Activated CD4-positive, alpha-beta T cell treated with anti-CD3 and anti-CD28 coated beads for 36 hours (primary cell): ENCODE measurements at regions of chr2 and their contacts with region 1.

Region 1: DNA sequence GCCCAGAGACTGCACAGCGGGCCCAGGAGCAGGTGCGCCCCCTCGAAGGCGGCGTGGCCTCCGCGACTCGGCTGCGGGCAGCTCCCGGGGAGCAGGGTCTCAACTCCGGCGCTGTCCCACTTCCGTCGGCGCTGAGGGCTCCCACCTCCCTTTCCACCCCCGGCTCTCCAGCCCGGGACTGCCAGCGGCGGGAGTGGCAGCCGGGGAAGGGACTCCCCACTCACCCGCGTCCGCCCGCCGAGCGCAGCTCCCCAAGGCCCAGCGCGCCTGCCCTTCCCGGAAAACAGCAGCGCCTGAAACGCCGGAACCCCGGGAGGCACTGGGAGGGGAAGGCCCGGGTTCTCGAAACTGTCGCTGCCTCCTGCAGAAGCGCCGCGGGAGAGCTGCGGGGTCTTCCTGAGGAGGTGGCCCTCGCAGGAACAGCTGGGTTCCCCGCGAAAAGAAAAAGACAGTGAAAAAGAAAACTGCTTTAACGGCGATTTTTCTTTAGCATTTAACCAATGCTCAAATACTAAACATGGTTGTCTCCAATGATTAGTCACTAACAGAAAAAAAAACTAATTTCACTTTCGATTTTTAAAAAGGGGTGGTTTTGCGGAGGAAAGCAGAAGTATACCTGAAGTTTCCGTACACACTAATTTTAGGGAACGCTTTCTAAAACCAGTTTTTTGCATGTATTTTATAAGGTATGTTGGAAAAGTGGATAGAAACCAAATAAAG is at the start of gene NMI:
- DNase-seq: peak; percentile 84
- ATAC-seq: peak; percentile 64
- H3K4me3 Mint-ChIP-seq: peak within 1 kb of the TSS; percentile 76
- H3K27ac Mint-ChIP-seq: peak within 1 kb of the TSS; percentile 96
- H3K4me1 Mint-ChIP-seq: peaks cover 43% of the 10 kb centered on the region
- H3K27me3 Mint-ChIP-seq: peaks cover 3% of the 10 kb centered on the region
- total RNA-seq, gene NMI: 32.3 to 37.4 TPM

Region 2: GRCh38 chr2:150853263-150853662 is 436.3 kb before region 1 on chr2:
- CTCF ChIA-PET with region 1: no interaction called
- POLR2A ChIA-PET with region 1: no interaction called
- intact Hi-C with region 1: no loop called
- DNase-seq: no peak
- ATAC-seq: no peak
- H3K4me3 Mint-ChIP-seq: no peak overlapping the region
- H3K27ac Mint-ChIP-seq: no peak overlapping the region
- H3K4me1 Mint-ChIP-seq: no peaks in the 10 kb centered on the region
- H3K27me3 Mint-ChIP-seq: peaks cover 2% of the 10 kb centered on the region

Region 3: GRCh38 chr2:151261231-151261976 is 28.1 kb before region 1 on chr2 and contains the start of gene RBM43:
- CTCF ChIA-PET with region 1: interaction called, 3 read pairs
- POLR2A ChIA-PET with region 1: no interaction called
- intact Hi-C with region 1: loop called (anchors 1 kb)
- DNase-seq: peak; percentile 88
- ATAC-seq: peak; percentile 92
- H3K4me3 Mint-ChIP-seq: peak within 1 kb of the TSS; percentile 89
- H3K27ac Mint-ChIP-seq: peak within 1 kb of the TSS; percentile 98
- H3K4me1 Mint-ChIP-seq: peaks cover 18% of the 10 kb centered on the region
- H3K27me3 Mint-ChIP-seq: no peaks in the 10 kb centered on the region
- total RNA-seq, gene RBM43: 5.7 to 5.8 TPM

Region 4: GRCh38 chr2:151367571-151367970 is 78.0 kb after region 1 on chr2:
- CTCF ChIA-PET with region 1: no interaction called
- POLR2A ChIA-PET with region 1: no interaction called
- intact Hi-C with region 1: no loop called
- DNase-seq: no peak
- ATAC-seq: no peak
- H3K4me3 Mint-ChIP-seq: no peak overlapping the region
- H3K27ac Mint-ChIP-seq: no peak overlapping the region
- H3K4me1 Mint-ChIP-seq: no peaks in the 10 kb centered on the region
- H3K27me3 Mint-ChIP-seq: peaks cover 2% of the 10 kb centered on the region

Region 5: GRCh38 chr2:151422917-151423439 is 133.4 kb after region 1 on chr2:
- CTCF ChIA-PET with region 1: interaction called, 3 read pairs
- POLR2A ChIA-PET with region 1: interaction called, 9 read pairs
- intact Hi-C with region 1: loop called in 1 of 2 experiments (anchors 1 kb)
- DNase-seq: peak; percentile 29
- ATAC-seq: peak; percentile 68
- H3K4me3 Mint-ChIP-seq: no peak overlapping the region
- H3K27ac Mint-ChIP-seq: peak overlapping the region; percentile 56
- H3K4me1 Mint-ChIP-seq: peaks cover 41% of the 10 kb centered on the region
- H3K27me3 Mint-ChIP-seq: no peaks in the 10 kb centered on the region

Region 6: GRCh38 chr2:151439127-151439526 is 149.6 kb after region 1 on chr2:
- CTCF ChIA-PET with region 1: no interaction called
- POLR2A ChIA-PET with region 1: no interaction called
- intact Hi-C with region 1: no loop called
- DNase-seq: no peak
- ATAC-seq: no peak
- H3K4me3 Mint-ChIP-seq: no peak overlapping the region
- H3K27ac Mint-ChIP-seq: no peak overlapping the region
- H3K4me1 Mint-ChIP-seq: peaks cover 2% of the 10 kb centered on the region
- H3K27me3 Mint-ChIP-seq: no peaks in the 10 kb centered on the region

Region 7: DNA sequence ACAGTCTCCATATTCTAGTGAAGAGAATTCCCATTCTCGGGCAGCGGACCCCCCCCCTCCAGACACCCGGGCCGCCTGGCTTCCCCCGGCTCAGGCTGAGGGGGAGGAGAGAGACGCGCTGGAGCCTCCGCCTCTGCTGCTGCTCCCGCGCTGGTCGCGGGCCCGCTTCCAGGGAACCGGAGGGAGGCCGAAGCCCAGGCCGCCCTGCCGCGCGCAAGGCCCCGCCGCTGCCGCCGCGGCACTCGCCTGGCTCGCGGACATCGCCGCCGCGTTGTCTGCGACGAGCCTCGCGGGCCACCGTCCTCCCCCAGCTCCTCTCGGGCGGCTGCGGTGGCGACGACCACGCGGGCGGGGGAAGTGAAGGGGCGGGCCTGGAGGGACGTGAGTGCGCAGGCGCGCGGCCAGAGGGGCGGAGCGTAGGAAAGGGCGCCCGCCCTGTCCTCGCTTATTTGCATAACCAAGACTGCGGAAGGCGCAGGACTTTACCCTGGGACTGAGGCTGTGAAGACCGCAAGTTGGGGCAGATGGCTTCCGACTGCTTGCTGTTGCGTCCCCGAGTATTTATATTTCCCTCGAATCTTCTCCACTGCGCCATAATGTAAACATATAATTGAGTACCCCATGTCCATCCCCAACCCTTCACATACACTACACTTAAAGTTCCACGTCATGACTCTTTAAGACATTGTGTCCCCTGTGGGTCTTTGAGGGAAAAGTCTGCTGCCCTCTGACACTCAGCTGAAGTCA is 538.8 kb after region 1 on chr2 and contains the start of gene ARL5A:
- CTCF ChIA-PET with region 1: no interaction called
- POLR2A ChIA-PET with region 1: no interaction called
- intact Hi-C with region 1: loop called in 1 of 2 experiments (anchors 5 kb)
- DNase-seq: peak; percentile 97
- ATAC-seq: peak; percentile 97
- H3K4me3 Mint-ChIP-seq: peak within 1 kb of the TSS; percentile 97
- H3K27ac Mint-ChIP-seq: peak within 1 kb of the TSS; percentile 94
- H3K4me1 Mint-ChIP-seq: peaks cover 48% of the 10 kb centered on the region
- H3K27me3 Mint-ChIP-seq: no peaks in the 10 kb centered on the region
- total RNA-seq, gene ARL5A: 60.8 to 64.9 TPM

Region 8: GRCh38 chr2:152717228-152718075 is 1427.9 kb after region 1 on chr2 and contains the start of gene PRPF40A:
- CTCF ChIA-PET with region 1: no interaction called
- POLR2A ChIA-PET with region 1: no interaction called
- intact Hi-C with region 1: loop called (anchors 5 kb)
- DNase-seq: peak; percentile 99
- ATAC-seq: peak; percentile 82
- H3K4me3 Mint-ChIP-seq: peak within 1 kb of the TSS; percentile 99
- H3K27ac Mint-ChIP-seq: peak within 1 kb of the TSS; percentile 99
- H3K4me1 Mint-ChIP-seq: peaks cover 61% of the 10 kb centered on the region
- H3K27me3 Mint-ChIP-seq: no peaks in the 10 kb centered on the region
- total RNA-seq, gene PRPF40A: 145 to 152 TPM